ENCODE measurements at regions of chr12 and their contacts with region 1.

Region 1: DNA sequence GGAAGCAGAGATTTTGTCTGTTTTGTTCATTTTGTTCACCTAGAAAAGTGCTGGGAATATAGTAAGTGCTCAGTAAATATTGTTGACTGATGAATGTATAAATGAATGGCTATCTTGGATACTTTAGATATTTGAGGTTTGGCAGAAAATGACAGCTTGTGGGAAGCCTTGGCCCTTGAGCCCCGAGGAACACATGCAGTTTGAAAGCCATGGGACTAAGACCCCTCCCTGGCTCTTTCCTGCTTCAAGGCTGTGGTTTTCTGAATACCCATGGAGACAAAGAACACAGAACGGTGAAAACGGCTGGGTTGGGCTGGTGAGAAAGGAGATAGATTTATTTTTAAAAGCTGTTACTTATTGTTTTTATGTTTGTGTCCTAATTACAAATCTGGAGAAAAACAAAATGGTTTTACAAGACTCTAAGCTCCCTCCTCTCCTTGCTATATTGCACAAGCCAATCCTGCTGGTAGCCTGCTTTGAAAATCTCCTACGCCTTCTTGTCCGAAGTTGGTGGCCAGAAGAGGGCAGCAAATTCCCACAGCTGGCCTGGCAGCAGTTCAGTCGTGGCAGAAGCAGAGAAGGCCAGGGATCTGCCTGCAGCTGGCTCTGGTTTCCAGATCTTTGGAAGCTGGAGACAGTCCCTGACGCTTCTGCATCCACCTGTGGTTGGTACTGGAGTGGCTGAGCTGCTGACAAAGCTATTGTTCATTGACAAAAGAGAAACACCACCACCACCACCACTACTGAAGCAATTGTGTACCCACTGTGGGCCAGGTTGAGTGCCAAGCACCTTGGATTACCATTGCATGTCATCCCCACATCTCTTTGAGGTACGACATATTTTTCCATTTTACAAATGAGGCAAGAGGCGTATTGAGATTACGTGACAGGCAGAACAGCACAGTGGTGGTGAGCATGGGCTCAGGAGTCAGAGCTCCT is 5.2 kb upstream of the KRT85 start:
- DNase-seq: peak; percentile 63 to 77
- ATAC-seq: peak; percentile 55 to 86 (median 83)
- H3K4me3 ChIP-seq: no peak overlapping the region
- H3K4me3 Mint-ChIP-seq: no peak overlapping the region
- H3K27ac ChIP-seq: no peak overlapping the region
- H3K27ac Mint-ChIP-seq: no peak overlapping the region
- H3K4me1 ChIP-seq: no peaks in the 10 kb centered on the region
- H3K4me1 Mint-ChIP-seq: peaks cover 0 to 11% of the 10 kb centered on the region in 2 donors
- H3K27me3 ChIP-seq: peaks cover 10% of the 10 kb centered on the region
- H3K27me3 Mint-ChIP-seq: peaks cover 51 to 52% of the 10 kb centered on the region in 2 donors
- CTCF ChIP-seq: peak; percentile 68

Region 2: GRCh38 chr12:52534487-52534886 is 162.0 kb after region 1 on chr12:
- intact Hi-C with region 1: no loop called
- DNase-seq: no peak
- ATAC-seq: no peak
- H3K4me3 ChIP-seq: no peak overlapping the region
- H3K4me3 Mint-ChIP-seq: no peak overlapping the region
- H3K27ac ChIP-seq: no peak overlapping the region
- H3K27ac Mint-ChIP-seq: no peak overlapping the region
- H3K4me1 ChIP-seq: peaks cover 2% of the 10 kb centered on the region
- H3K4me1 Mint-ChIP-seq: peaks cover 13 to 18% of the 10 kb centered on the region in 2 donors
- H3K27me3 ChIP-seq: no peaks in the 10 kb centered on the region
- H3K27me3 Mint-ChIP-seq: peaks cover 9 to 10% of the 10 kb centered on the region in 2 donors
- CTCF ChIP-seq: no peak

Region 3: GRCh38 chr12:52870351-52871290 is 498.1 kb after region 1 on chr12:
- intact Hi-C with region 1: loop called (anchors 2 kb)
- DNase-seq: peak; percentile 81 to 88
- ATAC-seq: peak; percentile 53 to 77 (median 67)
- H3K4me3 ChIP-seq: no peak overlapping the region
- H3K4me3 Mint-ChIP-seq: no peak overlapping the region
- H3K27ac ChIP-seq: peak overlapping the region; percentile 53
- H3K27ac Mint-ChIP-seq: peak overlapping the region in 1 of 2 donors; percentile 92
- H3K4me1 ChIP-seq: peaks cover 44% of the 10 kb centered on the region
- H3K4me1 Mint-ChIP-seq: peaks cover 27 to 76% of the 10 kb centered on the region in 2 donors
- H3K27me3 ChIP-seq: peaks cover 5% of the 10 kb centered on the region
- H3K27me3 Mint-ChIP-seq: peaks cover 0 to 17% of the 10 kb centered on the region in 2 donors
- CTCF ChIP-seq: peak; percentile 88

Region 4: GRCh38 chr12:52879394-52880351 is 507.2 kb after region 1 on chr12:
- intact Hi-C with region 1: loop called (anchors 1 kb)
- DNase-seq: peak; percentile 77 to 85
- ATAC-seq: peak; percentile 95 to 98 (median 98)
- H3K4me3 ChIP-seq: no peak overlapping the region
- H3K4me3 Mint-ChIP-seq: peak overlapping the region; percentile 68
- H3K27ac ChIP-seq: no peak overlapping the region
- H3K27ac Mint-ChIP-seq: peak overlapping the region in 1 of 2 donors; percentile 37
- H3K4me1 ChIP-seq: peaks cover 22% of the 10 kb centered on the region
- H3K4me1 Mint-ChIP-seq: peaks cover 2 to 33% of the 10 kb centered on the region in 2 donors
- H3K27me3 ChIP-seq: peaks cover 3% of the 10 kb centered on the region
- H3K27me3 Mint-ChIP-seq: peaks cover 0 to 27% of the 10 kb centered on the region in 2 donors
- CTCF ChIP-seq: peak; percentile 99

Region 5: GRCh38 chr12:52980693-52981423 is 608.4 kb after region 1 on chr12:
- intact Hi-C with region 1: loop called (anchors 1 kb)
- DNase-seq: peak; percentile 65 to 92
- ATAC-seq: peak; percentile 94 to 99 (median 98)
- H3K4me3 ChIP-seq: no peak overlapping the region
- H3K4me3 Mint-ChIP-seq: no peak overlapping the region
- H3K27ac ChIP-seq: no peak overlapping the region
- H3K27ac Mint-ChIP-seq: no peak overlapping the region
- H3K4me1 ChIP-seq: peaks cover 4% of the 10 kb centered on the region
- H3K4me1 Mint-ChIP-seq: peaks cover 0 to 7% of the 10 kb centered on the region in 2 donors
- H3K27me3 ChIP-seq: peaks cover 5% of the 10 kb centered on the region
- H3K27me3 Mint-ChIP-seq: peaks cover 28 to 33% of the 10 kb centered on the region in 2 donors
- CTCF ChIP-seq: peak; percentile 98

Measured in natural killer cell (primary cell).